SK-N-SH (cell line): ENCODE measurements at regions of chr12 and their contacts with region 1.

Region 1: DNA sequence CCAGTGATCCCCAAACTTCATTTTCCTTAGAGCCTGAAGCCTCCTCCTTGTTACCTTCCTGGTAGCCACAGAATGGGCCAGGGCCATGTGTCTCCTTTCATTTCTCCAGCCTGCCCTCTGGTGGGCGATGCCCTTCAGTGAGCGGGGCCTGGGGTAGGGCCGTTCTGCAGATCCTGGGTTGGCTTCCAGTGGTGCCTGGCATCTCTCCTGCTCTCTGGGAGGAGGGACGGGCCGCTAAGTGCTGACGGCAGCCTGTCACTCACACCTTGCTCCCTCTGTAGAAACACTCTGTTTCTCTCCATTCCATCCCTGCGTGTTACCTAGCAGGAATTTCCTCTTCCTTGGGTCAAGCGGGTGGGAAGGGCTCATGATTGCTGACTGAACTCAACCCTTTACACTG is 232.1 kb downstream of the CACNA1C start:
- DNase-seq: peak; percentile 86
- H3K4me3 ChIP-seq: peak overlapping the region; percentile 6 to 12; a peak in 2 of 4 replicates
- H3K27ac ChIP-seq: peak overlapping the region; percentile 87 to 99
- H3K4me1 ChIP-seq: peaks cover 37 to 76% of the 10 kb centered on the region in 2 experiments
- H3K27me3 ChIP-seq: no peaks in the 10 kb centered on the region
- CTCF ChIP-seq: peak; percentile 84
- EP300 ChIP-seq: no peak
- RAD21 ChIP-seq: peak; percentile 81

Region 2: GRCh38 chr12:2057041-2057794 is 227.6 kb before region 1 on chr12:
- CTCF ChIA-PET with region 1: interaction called, 150 read pairs
- POLR2A ChIA-PET with region 1: no interaction called
- DNase-seq: peak; percentile 75
- H3K4me3 ChIP-seq: peak overlapping the region in 1 of 2 experiments; percentile 31; a peak in 1 of 4 replicates
- H3K27ac ChIP-seq: no peak overlapping the region
- H3K4me1 ChIP-seq: peaks cover 0 to 33% of the 10 kb centered on the region in 2 experiments; a peak in 1 of 4 replicates
- H3K27me3 ChIP-seq: no peaks in the 10 kb centered on the region
- CTCF ChIP-seq: peak; percentile 83
- EP300 ChIP-seq: no peak
- RAD21 ChIP-seq: peak; percentile 86

Region 3: DNA sequence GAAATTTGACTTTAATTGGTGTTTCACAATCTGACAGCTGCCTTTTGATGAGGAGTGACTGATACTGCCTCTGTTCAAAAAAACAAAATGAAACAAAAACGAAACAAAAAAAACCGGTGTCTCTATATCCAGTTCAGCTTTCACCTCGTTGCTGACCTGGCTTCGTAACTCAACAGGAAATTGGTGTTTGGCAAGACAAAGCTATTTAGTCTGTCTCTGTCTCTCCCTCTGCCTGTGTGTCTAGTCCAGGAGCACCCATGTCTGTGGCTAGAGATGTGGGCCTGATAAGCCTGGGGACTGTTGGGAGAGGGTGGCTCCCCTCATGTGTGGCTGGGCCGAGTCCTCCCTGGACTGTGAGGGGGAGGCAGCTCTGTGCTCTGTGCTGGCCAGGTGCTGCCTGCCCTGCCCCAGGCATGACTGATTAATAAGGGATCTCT is 220.8 kb before region 1 on chr12:
- CTCF ChIA-PET with region 1: interaction called, 150 read pairs
- POLR2A ChIA-PET with region 1: no interaction called
- DNase-seq: peak; percentile 73
- H3K4me3 ChIP-seq: peak overlapping the region in 1 of 2 experiments; percentile 31; a peak in 1 of 4 replicates
- H3K27ac ChIP-seq: peak overlapping the region in 1 of 2 experiments; percentile 82; a peak in 2 of 4 replicates
- H3K4me1 ChIP-seq: peaks cover 0 to 18% of the 10 kb centered on the region in 2 experiments; a peak in 2 of 4 replicates
- H3K27me3 ChIP-seq: no peaks in the 10 kb centered on the region
- CTCF ChIP-seq: no peak
- EP300 ChIP-seq: no peak
- RAD21 ChIP-seq: no peak

Region 4: GRCh38 chr12:2268556-2269286 is 16.1 kb before region 1 on chr12:
- CTCF ChIA-PET with region 1: interaction called, 32 read pairs
- POLR2A ChIA-PET with region 1: interaction called, 3 read pairs
- DNase-seq: no peak
- H3K4me3 ChIP-seq: no peak overlapping the region
- H3K27ac ChIP-seq: peak overlapping the region; percentile 67 to 91
- H3K4me1 ChIP-seq: peaks cover 43 to 51% of the 10 kb centered on the region in 2 experiments; a peak in 3 of 4 replicates
- H3K27me3 ChIP-seq: no peaks in the 10 kb centered on the region
- CTCF ChIP-seq: no peak
- EP300 ChIP-seq: peak; percentile 26 to 94; a peak in 3 of 4 replicates
- RAD21 ChIP-seq: no peak

Region 5: DNA sequence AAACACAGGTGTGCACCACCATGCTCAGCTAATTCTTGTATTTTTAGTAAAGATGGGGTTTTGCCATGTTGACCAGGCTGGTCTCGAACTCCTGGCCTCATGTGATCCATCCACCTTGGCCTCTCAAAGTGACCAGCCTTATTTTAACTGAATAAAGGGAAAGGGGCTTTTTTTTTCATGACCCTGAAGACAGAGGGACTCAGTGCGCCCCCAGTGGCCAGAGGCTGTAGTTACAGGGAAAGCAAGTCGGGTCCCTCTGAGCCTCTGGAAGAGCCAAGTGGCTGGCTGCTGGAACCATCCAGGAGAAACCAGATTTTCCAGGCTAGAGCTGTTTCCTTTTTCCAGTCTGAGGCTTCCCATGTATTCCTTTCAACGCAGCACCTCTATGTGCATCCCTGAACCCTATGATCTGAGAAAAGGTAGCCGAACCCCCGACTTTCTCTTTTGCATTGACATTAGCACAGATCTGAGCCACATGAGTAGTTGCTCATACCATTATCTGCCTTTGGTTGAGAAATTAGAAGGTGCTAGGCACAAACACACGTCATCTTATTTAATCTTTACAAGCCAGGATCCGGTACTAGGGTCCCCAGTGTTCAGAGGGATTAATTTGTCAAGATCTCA is 110.6 kb after region 1 on chr12:
- CTCF ChIA-PET with region 1: interaction called, 13 read pairs
- POLR2A ChIA-PET with region 1: no interaction called
- DNase-seq: peak; percentile 78
- H3K4me3 ChIP-seq: peak overlapping the region in 1 of 2 experiments; percentile 39; a peak in 1 of 4 replicates
- H3K27ac ChIP-seq: no peak overlapping the region
- H3K4me1 ChIP-seq: no peaks in the 10 kb centered on the region; a peak in 1 of 4 replicates
- H3K27me3 ChIP-seq: no peaks in the 10 kb centered on the region; the same call in 1 of the 2 replicates
- CTCF ChIP-seq: peak; percentile 95
- EP300 ChIP-seq: no peak
- RAD21 ChIP-seq: peak; percentile 65